Activated CD4-positive, alpha-beta memory T cell treated with anti-CD3 and anti-CD28 coated beads for 36 hours (primary cell): ENCODE measurements at regions of chr7 and their contacts with region 1.

Region 1: GRCh38 chr7:111089822-111090426 is 1.0 kb upstream of the LRRN3 start:
- DNase-seq: no peak
- H3K4me3 Mint-ChIP-seq: no peak overlapping the region
- H3K27ac Mint-ChIP-seq: no peak overlapping the region
- H3K4me1 Mint-ChIP-seq: peaks cover 71% of the 10 kb centered on the region
- H3K27me3 Mint-ChIP-seq: no peaks in the 10 kb centered on the region

Region 2: GRCh38 chr7:110801502-110801901 is 288.4 kb before region 1 on chr7:
- CTCF ChIA-PET with region 1: no interaction called
- POLR2A ChIA-PET with region 1: no interaction called
- intact Hi-C with region 1: loop called (anchors 5 kb)
- DNase-seq: no peak
- H3K4me3 Mint-ChIP-seq: no peak overlapping the region
- H3K27ac Mint-ChIP-seq: no peak overlapping the region
- H3K4me1 Mint-ChIP-seq: peaks cover 7% of the 10 kb centered on the region
- H3K27me3 Mint-ChIP-seq: no peaks in the 10 kb centered on the region

Region 3: DNA sequence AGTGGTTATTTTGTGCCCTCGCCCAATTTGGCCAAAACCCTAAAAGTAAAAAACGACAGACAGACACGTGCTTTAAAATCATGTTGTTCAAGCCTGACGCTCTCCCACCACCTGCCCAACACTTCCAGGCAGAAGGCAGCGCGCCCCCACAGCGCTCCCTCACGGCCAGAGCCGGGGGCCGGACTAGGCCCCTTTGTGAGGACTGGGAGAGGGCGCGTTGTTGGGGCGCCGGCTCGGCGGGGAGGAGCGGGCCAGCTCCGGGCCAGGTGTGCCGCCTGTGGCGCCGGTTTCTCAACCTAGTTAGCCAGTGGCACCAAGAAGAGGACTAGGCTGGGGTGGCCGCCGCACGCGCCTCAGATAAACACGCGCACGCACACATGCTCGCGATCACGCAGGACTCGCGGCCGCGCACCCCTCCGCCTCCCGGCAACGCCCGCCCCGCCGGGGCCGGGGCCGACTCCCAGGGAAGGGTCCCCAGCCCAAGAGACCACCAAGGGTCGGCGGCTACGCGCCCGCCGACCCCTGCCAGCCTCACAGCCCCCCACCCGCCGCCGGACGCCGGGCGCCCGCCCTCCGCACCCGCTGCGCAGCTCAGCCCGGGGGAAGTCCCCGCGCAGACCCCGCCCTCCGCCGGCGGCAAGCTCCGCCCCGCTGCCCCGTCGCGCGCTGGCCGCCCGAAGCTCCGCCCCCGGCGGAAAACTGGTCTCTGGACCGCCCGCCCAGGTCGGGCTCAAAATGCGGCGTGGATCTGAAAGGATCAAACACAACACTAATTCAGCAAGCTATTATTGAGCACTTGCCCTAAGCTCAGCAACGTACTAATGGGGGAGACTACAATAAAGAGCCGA is 472.2 kb after region 1 on chr7 and contains the start of gene IMMP2L:
- CTCF ChIA-PET with region 1: no interaction called
- POLR2A ChIA-PET with region 1: no interaction called
- intact Hi-C with region 1: loop called (anchors 5 kb)
- DNase-seq: peak; percentile 93
- H3K4me3 Mint-ChIP-seq: peak within 1 kb of the TSS; percentile 83
- H3K27ac Mint-ChIP-seq: peak within 1 kb of the TSS; percentile 79
- H3K4me1 Mint-ChIP-seq: peaks cover 40% of the 10 kb centered on the region
- H3K27me3 Mint-ChIP-seq: peaks cover 4% of the 10 kb centered on the region
- total RNA-seq, gene IMMP2L: 14.4 to 20.5 TPM

Region 4: GRCh38 chr7:111735661-111736551 is 646.0 kb after region 1 on chr7:
- CTCF ChIA-PET with region 1: no interaction called
- POLR2A ChIA-PET with region 1: no interaction called
- intact Hi-C with region 1: loop called (anchors 2 kb)
- DNase-seq: peak; percentile 40
- H3K4me3 Mint-ChIP-seq: no peak overlapping the region
- H3K27ac Mint-ChIP-seq: no peak overlapping the region
- H3K4me1 Mint-ChIP-seq: no peaks in the 10 kb centered on the region
- H3K27me3 Mint-ChIP-seq: peaks cover 5% of the 10 kb centered on the region